Heart left ventricle (tissue), 16 donors: ENCODE measurements at regions of chr1 and their contacts with region 1.

Region 1: GRCh38 chr1:89598450-89599331 is 34.2 kb upstream of the LRRC8C start:
- DNase-seq: no peak
- ATAC-seq: peak in 3 of 4 donors; percentile 68 to 72 (median 69)
- H3K4me3 ChIP-seq: no peak overlapping the region
- H3K27ac ChIP-seq: no peak overlapping the region
- H3K4me1 ChIP-seq: peaks cover 0 to 19% (median 5%) of the 10 kb centered on the region in 12 donors
- H3K27me3 ChIP-seq: no peaks in the 10 kb centered on the region
- CTCF ChIP-seq: peak; percentile 51 to 79 (median 69)
- POLR2A ChIP-seq: no peak

Region 2: DNA sequence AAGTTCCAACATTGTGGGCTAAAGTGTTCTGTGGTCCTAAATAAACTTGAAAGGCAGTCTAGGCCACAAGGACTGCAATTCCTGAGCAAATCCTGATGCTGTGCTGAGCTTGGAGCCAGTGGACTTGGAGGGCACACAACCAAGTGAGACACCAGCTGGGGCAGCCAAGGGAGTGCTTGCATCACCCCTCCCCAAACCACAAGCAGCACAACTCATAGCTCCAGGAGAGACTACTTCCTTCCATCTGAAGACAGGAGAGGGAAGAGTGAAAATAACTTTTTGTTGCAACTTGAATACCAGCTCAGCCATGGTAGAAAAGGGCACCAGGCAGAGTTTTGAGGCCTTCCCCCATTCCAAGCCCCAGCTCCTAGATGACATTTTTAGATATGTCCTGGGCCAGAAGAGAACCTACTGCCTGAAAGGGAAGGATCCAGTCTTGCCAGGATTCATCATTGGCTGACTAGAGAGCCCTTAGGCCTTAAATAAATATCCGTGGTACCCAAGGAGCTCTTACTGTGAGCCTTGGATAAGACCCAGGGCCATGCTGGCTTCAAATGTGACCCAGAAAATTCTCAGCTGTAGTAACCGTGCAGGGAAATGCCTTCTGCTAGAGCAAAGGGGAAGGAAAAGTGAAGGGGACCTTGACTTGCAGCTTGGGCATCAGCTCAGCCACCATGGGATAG is 109.5 kb before region 1 on chr1:
- intact Hi-C with region 1: loop called in 5 of 10 experiments (anchors 5 kb)
- DNase-seq: no peak
- ATAC-seq: no peak
- H3K4me3 ChIP-seq: no peak overlapping the region
- H3K27ac ChIP-seq: no peak overlapping the region
- H3K4me1 ChIP-seq: peaks cover 0 to 12% (median 0%) of the 10 kb centered on the region in 12 donors
- H3K27me3 ChIP-seq: no peaks in the 10 kb centered on the region
- CTCF ChIP-seq: no peak
- POLR2A ChIP-seq: no peak